ENCODE measurements at regions of chr18 and their contacts with region 1.

Region 1: GRCh38 chr18:46073474-46074331 is 1.6 kb upstream of the PSTPIP2 start:
- DNase-seq: peak; percentile 70
- ATAC-seq: peak; percentile 65
- H3K4me3 Mint-ChIP-seq: no peak overlapping the region
- H3K27ac Mint-ChIP-seq: peak overlapping the region; percentile 20
- H3K4me1 Mint-ChIP-seq: peaks cover 39% of the 10 kb centered on the region
- H3K27me3 Mint-ChIP-seq: no peaks in the 10 kb centered on the region
- CTCF ChIP-seq: peak; percentile 89

Region 2: GRCh38 chr18:45664824-45665763 is 408.6 kb before region 1 on chr18:
- CTCF ChIA-PET with region 1: interaction called, 51 read pairs
- POLR2A ChIA-PET with region 1: interaction called, 4 read pairs
- intact Hi-C with region 1: loop called (anchors 10 kb)
- DNase-seq: peak; percentile 80
- ATAC-seq: peak; percentile 56
- H3K4me3 Mint-ChIP-seq: no peak overlapping the region
- H3K27ac Mint-ChIP-seq: peak overlapping the region; percentile 61
- H3K4me1 Mint-ChIP-seq: peaks cover 50% of the 10 kb centered on the region
- H3K27me3 Mint-ChIP-seq: no peaks in the 10 kb centered on the region
- CTCF ChIP-seq: peak; percentile 91

Region 3: DNA sequence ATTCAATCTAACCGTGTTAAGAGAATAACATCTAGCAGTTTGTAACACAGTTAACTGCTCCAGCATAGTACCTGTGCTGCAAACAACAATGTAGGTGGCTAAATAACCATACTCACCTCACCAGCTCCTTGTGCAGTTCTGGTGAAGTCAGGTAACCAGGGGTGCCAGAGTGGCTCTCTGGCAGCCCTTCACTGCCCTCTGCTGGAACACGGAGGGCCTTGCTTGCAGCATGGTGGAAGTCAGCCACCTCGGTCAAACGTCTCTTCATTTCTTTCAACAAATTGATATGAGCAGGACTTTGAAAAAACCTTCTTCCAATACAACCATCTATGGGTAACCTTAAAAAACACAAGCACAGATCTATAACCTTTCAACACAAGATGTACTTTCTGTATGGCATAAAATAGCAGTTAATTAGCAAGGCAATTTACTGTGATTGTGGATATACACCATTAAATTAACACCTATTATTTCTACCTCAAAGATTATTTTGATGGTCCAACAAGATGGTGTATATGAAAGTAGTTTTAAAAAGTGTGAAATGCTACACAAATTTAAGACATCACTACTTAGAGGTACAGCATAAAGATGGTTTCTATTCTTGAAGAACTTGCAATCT is 163.2 kb before region 1 on chr18:
- CTCF ChIA-PET with region 1: interaction called, 13 read pairs
- POLR2A ChIA-PET with region 1: no interaction called
- intact Hi-C with region 1: no loop called
- DNase-seq: peak; percentile 73
- ATAC-seq: peak; percentile 94
- H3K4me3 Mint-ChIP-seq: no peak overlapping the region
- H3K27ac Mint-ChIP-seq: no peak overlapping the region
- H3K4me1 Mint-ChIP-seq: no peaks in the 10 kb centered on the region
- H3K27me3 Mint-ChIP-seq: no peaks in the 10 kb centered on the region
- CTCF ChIP-seq: peak; percentile 88

Region 4: GRCh38 chr18:45935591-45936335 is 137.9 kb before region 1 on chr18:
- CTCF ChIA-PET with region 1: interaction called, 19 read pairs
- POLR2A ChIA-PET with region 1: no interaction called
- intact Hi-C with region 1: loop called (anchors 10 kb)
- DNase-seq: no peak
- ATAC-seq: peak; percentile 59
- H3K4me3 Mint-ChIP-seq: no peak overlapping the region
- H3K27ac Mint-ChIP-seq: peak overlapping the region; percentile 31
- H3K4me1 Mint-ChIP-seq: peaks cover 33% of the 10 kb centered on the region
- H3K27me3 Mint-ChIP-seq: no peaks in the 10 kb centered on the region
- CTCF ChIP-seq: no peak

Region 5: DNA sequence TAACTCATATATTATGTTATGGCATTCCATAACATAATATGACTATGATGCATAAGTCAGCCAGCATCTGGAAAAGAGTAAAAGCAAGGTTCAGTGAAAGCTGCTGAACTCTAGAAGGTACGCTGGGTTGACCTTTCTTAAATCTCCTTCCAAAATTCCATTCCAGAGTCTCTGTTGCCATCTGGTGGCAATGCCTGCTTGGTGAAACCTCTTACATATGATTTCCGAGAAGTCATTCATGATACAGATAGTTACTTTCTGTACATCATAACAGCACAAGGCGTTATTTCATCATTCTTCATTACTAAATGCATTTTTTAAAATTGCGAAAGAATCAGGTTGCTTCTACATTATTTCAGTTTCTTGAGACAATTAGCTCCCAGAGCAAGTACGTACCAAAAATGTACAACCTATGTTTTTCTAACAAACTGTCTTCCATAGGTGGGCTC is 99.6 kb before region 1 on chr18:
- CTCF ChIA-PET with region 1: interaction called, 42 read pairs
- POLR2A ChIA-PET with region 1: interaction called, 6 read pairs
- intact Hi-C with region 1: loop called (anchors 2 kb)
- DNase-seq: peak; percentile 88
- ATAC-seq: peak; percentile 90
- H3K4me3 Mint-ChIP-seq: no peak overlapping the region
- H3K27ac Mint-ChIP-seq: peak overlapping the region; percentile 82
- H3K4me1 Mint-ChIP-seq: peaks cover 9% of the 10 kb centered on the region
- H3K27me3 Mint-ChIP-seq: no peaks in the 10 kb centered on the region
- CTCF ChIP-seq: peak; percentile 68

Region 6: DNA sequence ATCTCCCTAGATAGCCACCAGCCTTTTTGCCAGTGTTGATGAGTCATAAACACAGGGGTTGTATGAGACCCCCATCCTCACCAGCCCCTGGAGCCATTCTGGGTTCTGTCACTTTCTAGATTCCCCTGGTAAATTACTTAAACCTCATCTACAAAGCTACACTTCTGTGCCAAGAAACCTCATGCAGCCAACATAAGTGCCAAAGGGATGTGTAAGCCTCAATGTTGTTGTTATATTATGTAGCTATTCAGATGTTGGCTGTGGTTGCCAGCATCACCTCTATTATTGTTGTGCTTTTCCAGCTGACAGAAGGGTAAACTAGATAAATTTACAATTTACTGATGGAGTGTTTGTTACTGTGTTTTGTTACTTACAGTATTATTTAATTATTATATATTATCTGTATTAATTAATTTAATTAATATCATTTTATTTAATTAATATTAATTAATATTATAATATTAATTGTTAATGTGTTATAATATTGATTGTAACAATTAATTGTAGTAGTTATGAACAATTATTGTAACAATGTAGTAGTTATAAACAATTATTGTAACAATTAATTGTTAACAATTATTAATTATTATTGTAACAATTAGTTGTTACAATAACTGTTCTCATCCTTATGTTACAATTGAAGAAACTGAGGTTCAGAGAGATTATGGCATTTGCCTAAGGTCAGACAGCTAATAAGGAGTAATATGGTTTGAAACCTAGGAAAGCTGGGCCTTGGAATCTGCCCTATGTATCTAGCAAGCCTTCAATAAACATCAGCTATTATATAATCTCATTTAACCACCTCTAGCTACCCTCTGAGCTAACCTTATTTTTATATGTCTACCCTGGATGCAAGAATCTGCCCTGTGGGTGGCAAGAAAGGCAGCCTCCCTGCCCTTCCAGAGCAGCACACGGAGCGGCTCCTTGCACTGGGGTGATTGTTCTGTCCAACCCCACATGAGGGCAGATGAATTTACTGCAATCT is 37.7 kb before region 1 on chr18:
- CTCF ChIA-PET with region 1: interaction called, 13 read pairs
- POLR2A ChIA-PET with region 1: interaction called, 3 read pairs
- intact Hi-C with region 1: no loop called
- DNase-seq: no peak
- ATAC-seq: no peak
- H3K4me3 Mint-ChIP-seq: no peak overlapping the region
- H3K27ac Mint-ChIP-seq: no peak overlapping the region
- H3K4me1 Mint-ChIP-seq: peaks cover 20% of the 10 kb centered on the region
- H3K27me3 Mint-ChIP-seq: no peaks in the 10 kb centered on the region
- CTCF ChIP-seq: no peak

Region 7: GRCh38 chr18:46097801-46098615 is 24.3 kb after region 1 on chr18 and contains the start of gene ATP5F1A:
- CTCF ChIA-PET with region 1: interaction called, 20 read pairs
- POLR2A ChIA-PET with region 1: interaction called, 7 read pairs
- intact Hi-C with region 1: no loop called
- DNase-seq: peak; percentile 93
- ATAC-seq: peak; percentile 87
- H3K4me3 Mint-ChIP-seq: peak within 1 kb of the TSS; percentile 99
- H3K27ac Mint-ChIP-seq: peak within 1 kb of the TSS; percentile 95
- H3K4me1 Mint-ChIP-seq: peaks cover 22% of the 10 kb centered on the region
- H3K27me3 Mint-ChIP-seq: no peaks in the 10 kb centered on the region
- CTCF ChIP-seq: no peak
- total RNA-seq, gene ATP5F1A: 476 to 489 TPM